ENCODE measurements at regions of chr10 and their contacts with region 1.

Region 1: GRCh38 chr10:117496616-117497028 is 45.9 kb upstream of the EMX2 start:
- DNase-seq: no peak
- ATAC-seq: peak; percentile 87
- H3K4me3 ChIP-seq: no peak overlapping the region
- H3K27ac ChIP-seq: no peak overlapping the region
- H3K4me1 ChIP-seq: no peaks in the 10 kb centered on the region
- H3K27me3 ChIP-seq: peaks cover 0 to 2% of the 10 kb centered on the region in 2 experiments; a peak in 2 of 4 replicates
- CTCF ChIP-seq: peak; percentile 91 to 97 (median 91)
- EP300 ChIP-seq: no peak
- POLR2A ChIP-seq: no peak
- RAD21 ChIP-seq: peak; percentile 98

Region 2: DNA sequence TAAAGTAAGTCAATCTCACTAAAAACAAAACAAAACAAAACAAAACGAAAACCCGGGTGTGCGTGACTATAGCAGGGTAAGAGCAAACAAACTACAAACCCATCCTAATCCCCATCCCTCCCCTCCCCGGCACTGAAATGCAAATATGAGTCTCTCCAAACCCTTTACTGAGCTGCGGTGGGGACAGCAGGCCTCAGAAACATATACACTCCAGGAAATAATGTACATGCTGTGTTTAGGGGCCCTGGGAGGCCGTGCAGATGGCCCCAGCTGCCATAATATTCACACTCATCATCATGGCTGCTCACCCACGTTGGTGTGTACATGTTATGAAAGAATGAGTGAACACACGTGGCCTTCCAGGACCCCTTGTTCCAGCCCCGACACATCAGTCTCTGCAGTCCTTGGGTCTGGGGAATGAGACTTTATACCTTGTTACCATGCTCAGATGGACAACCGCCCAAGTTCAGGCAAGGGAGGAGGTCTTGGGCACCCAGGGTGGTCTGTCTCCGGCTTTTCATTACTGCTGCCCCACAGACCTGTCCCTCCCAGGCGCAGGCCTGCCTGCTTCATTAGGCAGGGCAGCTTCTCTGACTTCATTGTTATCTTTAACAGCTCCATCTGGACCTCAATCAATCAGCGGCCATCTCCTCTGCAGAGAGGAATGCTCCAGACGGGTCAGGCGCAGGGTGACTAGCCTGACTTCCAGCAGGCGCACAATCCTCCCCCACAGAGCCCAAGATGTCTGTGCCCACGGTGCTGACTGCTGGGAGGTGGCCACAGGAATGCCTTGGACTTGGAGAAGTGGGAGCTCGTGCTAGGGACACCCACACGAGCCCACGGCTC is 774.9 kb before region 1 on chr10:
- CTCF ChIA-PET with region 1: no interaction called
- POLR2A ChIA-PET with region 1: no interaction called
- RAD21 ChIA-PET with region 1: no interaction called
- SMC1A ChIA-PET with region 1: no interaction called
- in situ Hi-C with region 1: no loop called
- intact Hi-C with region 1: no loop called
- DNase-seq: no peak
- ATAC-seq: no peak
- H3K4me3 ChIP-seq: no peak overlapping the region
- H3K27ac ChIP-seq: no peak overlapping the region
- H3K4me1 ChIP-seq: no peaks in the 10 kb centered on the region
- H3K27me3 ChIP-seq: peaks cover 0 to 4% of the 10 kb centered on the region in 2 experiments
- CTCF ChIP-seq: no peak
- EP300 ChIP-seq: no peak
- POLR2A ChIP-seq: no peak
- RAD21 ChIP-seq: no peak

Region 3: GRCh38 chr10:117216611-117217195 is 279.9 kb before region 1 on chr10:
- CTCF ChIA-PET with region 1: interaction called, 32 read pairs
- POLR2A ChIA-PET with region 1: no interaction called
- RAD21 ChIA-PET with region 1: interaction called, 7 read pairs
- SMC1A ChIA-PET with region 1: interaction called, 7 read pairs
- in situ Hi-C with region 1: no loop called
- intact Hi-C with region 1: loop called (anchors 5 kb)
- DNase-seq: no peak
- ATAC-seq: peak; percentile 94
- H3K4me3 ChIP-seq: peak overlapping the region; percentile 52
- H3K27ac ChIP-seq: no peak overlapping the region
- H3K4me1 ChIP-seq: peaks cover 3% of the 10 kb centered on the region; the same call in 1 of the 2 replicates
- H3K27me3 ChIP-seq: no peaks in the 10 kb centered on the region; a peak in 2 of 4 replicates
- CTCF ChIP-seq: peak; percentile 99 to 100 (median 100)
- EP300 ChIP-seq: no peak
- POLR2A ChIP-seq: no peak
- RAD21 ChIP-seq: peak; percentile 90

Region 4: GRCh38 chr10:117334066-117334465 is 162.6 kb before region 1 on chr10:
- CTCF ChIA-PET with region 1: no interaction called
- POLR2A ChIA-PET with region 1: no interaction called
- RAD21 ChIA-PET with region 1: no interaction called
- SMC1A ChIA-PET with region 1: no interaction called
- in situ Hi-C with region 1: no loop called
- intact Hi-C with region 1: no loop called
- DNase-seq: no peak
- ATAC-seq: no peak
- H3K4me3 ChIP-seq: no peak overlapping the region
- H3K27ac ChIP-seq: no peak overlapping the region
- H3K4me1 ChIP-seq: no peaks in the 10 kb centered on the region
- H3K27me3 ChIP-seq: no peaks in the 10 kb centered on the region
- CTCF ChIP-seq: no peak
- EP300 ChIP-seq: no peak
- POLR2A ChIP-seq: no peak
- RAD21 ChIP-seq: no peak

Region 5: DNA sequence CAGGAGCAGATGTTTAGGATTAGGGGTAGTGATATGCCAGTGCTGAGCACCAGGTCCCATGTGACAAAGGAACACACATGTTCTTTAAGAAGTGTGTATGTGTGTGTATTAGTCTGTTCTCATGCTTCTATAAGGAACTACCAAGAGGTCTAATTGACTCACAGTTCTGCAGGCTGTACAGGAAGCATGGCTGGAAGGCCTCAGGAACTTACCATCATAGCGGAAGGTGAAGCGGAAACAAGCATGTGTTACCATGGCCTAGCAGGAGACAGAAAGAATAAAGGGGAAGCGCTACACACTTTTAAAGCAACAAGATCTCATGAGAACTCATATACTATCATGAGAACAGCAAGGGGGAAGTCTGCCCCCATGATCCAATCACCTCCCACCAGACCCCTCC is 98.6 kb before region 1 on chr10:
- CTCF ChIA-PET with region 1: no interaction called
- POLR2A ChIA-PET with region 1: no interaction called
- RAD21 ChIA-PET with region 1: no interaction called
- SMC1A ChIA-PET with region 1: no interaction called
- in situ Hi-C with region 1: no loop called
- intact Hi-C with region 1: no loop called
- DNase-seq: no peak
- ATAC-seq: no peak
- H3K4me3 ChIP-seq: no peak overlapping the region
- H3K27ac ChIP-seq: no peak overlapping the region
- H3K4me1 ChIP-seq: no peaks in the 10 kb centered on the region
- H3K27me3 ChIP-seq: no peaks in the 10 kb centered on the region; a peak in 1 of 4 replicates
- CTCF ChIP-seq: no peak
- EP300 ChIP-seq: no peak
- POLR2A ChIP-seq: no peak
- RAD21 ChIP-seq: no peak

Region 6: GRCh38 chr10:117449636-117450035 is 47.0 kb before region 1 on chr10:
- CTCF ChIA-PET with region 1: interaction called, 11 read pairs
- POLR2A ChIA-PET with region 1: no interaction called
- RAD21 ChIA-PET with region 1: no interaction called
- SMC1A ChIA-PET with region 1: interaction called, 3 read pairs
- in situ Hi-C with region 1: no loop called
- intact Hi-C with region 1: no loop called
- DNase-seq: no peak
- ATAC-seq: no peak
- H3K4me3 ChIP-seq: no peak overlapping the region
- H3K27ac ChIP-seq: no peak overlapping the region
- H3K4me1 ChIP-seq: no peaks in the 10 kb centered on the region
- H3K27me3 ChIP-seq: no peaks in the 10 kb centered on the region
- CTCF ChIP-seq: peak in 2 of 3 experiments; percentile 16 to 30; a peak in 1 of 6 replicates
- EP300 ChIP-seq: no peak
- POLR2A ChIP-seq: no peak
- RAD21 ChIP-seq: 0 out of 2 replicates have a peak, but pooled peaks have one; percentile 6

Region 7: DNA sequence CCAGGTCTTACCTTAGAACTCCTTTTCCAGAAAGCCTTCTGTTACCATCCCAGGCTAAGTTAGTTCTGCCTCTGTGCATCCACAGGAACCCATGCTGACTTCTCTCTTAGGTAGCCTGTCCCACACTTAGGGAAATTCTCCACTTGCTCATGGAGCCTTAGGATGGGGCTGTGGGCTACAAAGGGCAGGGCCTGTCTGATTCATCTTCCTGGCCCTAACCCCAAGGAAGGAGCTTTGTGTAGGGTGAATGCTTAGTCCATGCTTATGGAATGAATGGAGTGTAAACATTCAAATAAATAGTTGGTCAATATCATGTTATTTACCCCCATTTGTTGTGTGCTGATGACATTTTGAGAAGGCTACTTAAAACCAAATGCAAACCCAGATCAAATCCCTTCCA is 100.6 kb after region 1 on chr10:
- CTCF ChIA-PET with region 1: no interaction called
- POLR2A ChIA-PET with region 1: no interaction called
- RAD21 ChIA-PET with region 1: no interaction called
- SMC1A ChIA-PET with region 1: no interaction called
- in situ Hi-C with region 1: no loop called
- intact Hi-C with region 1: no loop called
- DNase-seq: no peak
- ATAC-seq: no peak
- H3K4me3 ChIP-seq: no peak overlapping the region
- H3K27ac ChIP-seq: no peak overlapping the region
- H3K4me1 ChIP-seq: no peaks in the 10 kb centered on the region
- H3K27me3 ChIP-seq: peaks cover 2 to 3% of the 10 kb centered on the region in 2 experiments; a peak in 3 of 4 replicates
- CTCF ChIP-seq: no peak
- EP300 ChIP-seq: no peak
- POLR2A ChIP-seq: no peak
- RAD21 ChIP-seq: no peak

Region 8: GRCh38 chr10:117616179-117616578 is 119.6 kb after region 1 on chr10:
- CTCF ChIA-PET with region 1: interaction called, 27 read pairs
- POLR2A ChIA-PET with region 1: no interaction called
- RAD21 ChIA-PET with region 1: interaction called, 5 read pairs
- SMC1A ChIA-PET with region 1: interaction called, 5 read pairs
- in situ Hi-C with region 1: no loop called
- intact Hi-C with region 1: no loop called
- DNase-seq: peak; percentile 23
- ATAC-seq: peak; percentile 76
- H3K4me3 ChIP-seq: no peak overlapping the region
- H3K27ac ChIP-seq: no peak overlapping the region
- H3K4me1 ChIP-seq: peaks cover 7% of the 10 kb centered on the region
- H3K27me3 ChIP-seq: no peaks in the 10 kb centered on the region
- CTCF ChIP-seq: no peak
- EP300 ChIP-seq: peak in 1 of 2 experiments; percentile 78; a peak in 1 of 4 replicates
- POLR2A ChIP-seq: no peak
- RAD21 ChIP-seq: no peak

Region 9: DNA sequence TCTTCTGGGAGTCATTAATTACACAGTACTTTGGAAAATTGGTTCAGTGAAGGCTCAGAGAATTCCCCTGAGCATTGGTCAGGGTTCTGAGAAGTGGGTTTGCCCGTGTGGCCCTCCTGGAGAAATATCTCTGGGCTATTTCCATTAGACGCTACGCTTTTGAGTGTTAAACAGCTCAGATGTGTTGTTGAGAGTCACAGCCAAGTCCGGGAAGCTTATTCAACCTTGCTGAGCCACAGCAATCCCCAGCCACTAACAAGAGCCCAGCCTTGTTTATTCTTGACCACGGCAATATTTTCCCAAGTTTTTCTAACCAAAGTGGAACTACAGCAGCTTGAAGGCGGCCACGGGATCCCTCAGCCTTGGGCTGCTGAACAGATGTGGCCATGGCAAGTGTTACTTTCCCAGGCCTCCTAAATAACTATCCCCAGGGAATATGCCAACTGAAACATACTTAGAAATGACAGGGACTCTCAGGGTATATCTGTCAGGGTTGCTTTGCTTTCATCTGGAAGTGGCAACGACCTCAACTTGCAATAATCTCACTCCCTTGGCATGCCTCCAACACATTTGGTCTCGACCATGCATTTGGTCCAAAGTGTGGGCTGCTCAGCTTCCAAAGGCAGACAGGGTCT is 260.6 kb after region 1 on chr10:
- CTCF ChIA-PET with region 1: interaction called, 7 read pairs
- POLR2A ChIA-PET with region 1: no interaction called
- RAD21 ChIA-PET with region 1: no interaction called
- SMC1A ChIA-PET with region 1: interaction called, 3 read pairs
- in situ Hi-C with region 1: no loop called
- intact Hi-C with region 1: loop called (anchors 5 kb)
- DNase-seq: no peak
- ATAC-seq: no peak
- H3K4me3 ChIP-seq: no peak overlapping the region
- H3K27ac ChIP-seq: no peak overlapping the region
- H3K4me1 ChIP-seq: no peaks in the 10 kb centered on the region
- H3K27me3 ChIP-seq: peaks cover 0 to 5% of the 10 kb centered on the region in 2 experiments; a peak in 2 of 4 replicates
- CTCF ChIP-seq: no peak
- EP300 ChIP-seq: no peak
- POLR2A ChIP-seq: no peak
- RAD21 ChIP-seq: no peak

Region 10: DNA sequence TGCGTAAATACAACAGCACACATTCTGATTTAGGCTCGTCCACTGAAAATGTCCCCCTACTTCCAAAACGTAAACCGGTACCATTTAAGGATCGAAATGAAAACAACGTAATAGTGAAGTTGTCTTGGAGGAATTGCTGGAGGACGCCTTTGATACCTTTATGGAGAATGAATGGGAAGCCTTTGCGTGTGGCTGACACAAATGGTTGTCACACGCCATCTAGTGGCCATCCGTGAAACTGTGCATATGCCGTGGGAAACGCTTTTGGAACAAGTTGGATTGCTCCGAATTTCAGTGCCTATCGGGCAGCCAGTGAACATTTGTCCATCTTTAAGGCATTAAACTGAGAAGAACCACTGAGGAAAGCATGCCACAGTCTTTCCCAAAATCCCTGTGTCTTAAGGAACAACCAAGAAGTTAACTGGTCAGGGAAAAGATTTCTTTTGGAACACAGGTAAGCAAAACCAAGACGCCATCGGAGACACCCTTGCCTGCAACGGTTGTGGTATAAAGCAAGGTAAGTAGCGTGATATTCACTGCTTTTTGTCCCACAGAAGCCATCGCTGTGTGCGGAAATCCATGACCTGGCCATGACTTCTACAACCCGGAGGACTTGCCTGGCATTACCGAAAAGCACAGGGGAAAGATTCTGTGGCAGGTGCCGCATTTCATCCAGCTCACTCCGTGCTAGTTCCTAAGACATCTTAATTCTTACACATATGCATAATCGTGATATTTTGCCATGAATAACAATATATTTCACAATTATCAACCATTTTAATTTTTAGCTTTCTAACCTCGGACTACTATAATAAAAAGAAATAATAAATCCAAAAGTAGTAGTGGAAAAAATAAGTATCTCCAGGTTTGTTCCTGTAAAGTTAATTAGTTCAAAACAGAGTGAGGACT is 744.9 kb after region 1 on chr10:
- CTCF ChIA-PET with region 1: interaction called, 99 read pairs
- POLR2A ChIA-PET with region 1: no interaction called
- RAD21 ChIA-PET with region 1: interaction called, 71 read pairs
- SMC1A ChIA-PET with region 1: interaction called, 67 read pairs
- in situ Hi-C with region 1: loop called (anchors 5 kb)
- intact Hi-C with region 1: loop called (anchors 1 kb)
- DNase-seq: peak; percentile 16
- ATAC-seq: peak; percentile 63
- H3K4me3 ChIP-seq: no peak overlapping the region
- H3K27ac ChIP-seq: no peak overlapping the region
- H3K4me1 ChIP-seq: no peaks in the 10 kb centered on the region
- H3K27me3 ChIP-seq: peaks cover 0 to 3% of the 10 kb centered on the region in 2 experiments; a peak in 1 of 4 replicates
- CTCF ChIP-seq: peak; percentile 88 to 95 (median 88); a peak in 5 of 6 replicates
- EP300 ChIP-seq: no peak
- POLR2A ChIP-seq: no peak
- RAD21 ChIP-seq: peak; percentile 86

Region 11: GRCh38 chr10:118459726-118460193 is 963.1 kb after region 1 on chr10:
- CTCF ChIA-PET with region 1: interaction called, 30 read pairs
- POLR2A ChIA-PET with region 1: no interaction called
- RAD21 ChIA-PET with region 1: interaction called, 34 read pairs
- SMC1A ChIA-PET with region 1: interaction called, 12 read pairs
- in situ Hi-C with region 1: no loop called
- intact Hi-C with region 1: loop called (anchors 1 kb)
- DNase-seq: no peak
- ATAC-seq: peak; percentile 94
- H3K4me3 ChIP-seq: no peak overlapping the region
- H3K27ac ChIP-seq: no peak overlapping the region
- H3K4me1 ChIP-seq: no peaks in the 10 kb centered on the region
- H3K27me3 ChIP-seq: peaks cover 0 to 3% of the 10 kb centered on the region in 2 experiments; a peak in 3 of 4 replicates
- CTCF ChIP-seq: peak; percentile 65 to 81 (median 75)
- EP300 ChIP-seq: no peak
- POLR2A ChIP-seq: no peak
- RAD21 ChIP-seq: peak; percentile 65